ENCODE measurements at regions of chr2 and their contacts with region 1.

Region 1: GRCh38 chr2:70789304-70790135 is 923 bp downstream of the FIGLA start:
- DNase-seq: peak; percentile 78
- H3K4me3 Mint-ChIP-seq: peak overlapping the region; percentile 56
- H3K27ac Mint-ChIP-seq: no peak overlapping the region
- H3K4me1 Mint-ChIP-seq: peaks cover 10% of the 10 kb centered on the region
- H3K27me3 Mint-ChIP-seq: peaks cover 69% of the 10 kb centered on the region

Region 2: GRCh38 chr2:70767699-70768589 is 21.6 kb before region 1 on chr2 and contains the start of gene ADD2:
- CTCF ChIA-PET with region 1: interaction called, 18 read pairs
- DNase-seq: peak; percentile 64
- H3K4me3 Mint-ChIP-seq: peak within 1 kb of the TSS; percentile 84
- H3K27ac Mint-ChIP-seq: peak within 1 kb of the TSS; percentile 83
- H3K4me1 Mint-ChIP-seq: peaks cover 17% of the 10 kb centered on the region
- H3K27me3 Mint-ChIP-seq: peaks cover 62% of the 10 kb centered on the region

Region 3: GRCh38 chr2:70871398-70872211 is 82.1 kb after region 1 on chr2:
- CTCF ChIA-PET with region 1: interaction called, 67 read pairs
- DNase-seq: peak; percentile 87
- H3K4me3 Mint-ChIP-seq: no peak overlapping the region
- H3K27ac Mint-ChIP-seq: no peak overlapping the region
- H3K4me1 Mint-ChIP-seq: peaks cover 5% of the 10 kb centered on the region
- H3K27me3 Mint-ChIP-seq: peaks cover 69% of the 10 kb centered on the region

Region 4: GRCh38 chr2:70926042-70926441 is 136.5 kb after region 1 on chr2:
- CTCF ChIA-PET with region 1: interaction called, 32 read pairs
- DNase-seq: no peak
- H3K4me3 Mint-ChIP-seq: no peak overlapping the region
- H3K27ac Mint-ChIP-seq: no peak overlapping the region
- H3K4me1 Mint-ChIP-seq: no peaks in the 10 kb centered on the region
- H3K27me3 Mint-ChIP-seq: peaks cover 41% of the 10 kb centered on the region